Endothelial cell of umbilical vein (primary cell): ENCODE measurements at regions of chr15 and their contacts with region 1.

Region 1: GRCh38 chr15:40338041-40338657 is 2.6 kb downstream of the CCDC9B start:
- DNase-seq: peak; percentile 75
- H3K4me3 ChIP-seq: no peak overlapping the region
- H3K27ac ChIP-seq: peak overlapping the region; percentile 94
- H3K4me1 ChIP-seq: peaks cover 68% of the 10 kb centered on the region
- H3K27me3 ChIP-seq: no peaks in the 10 kb centered on the region
- CTCF ChIP-seq: peak; percentile 75 to 90
- POLR2A ChIP-seq: no peak

Region 2: DNA sequence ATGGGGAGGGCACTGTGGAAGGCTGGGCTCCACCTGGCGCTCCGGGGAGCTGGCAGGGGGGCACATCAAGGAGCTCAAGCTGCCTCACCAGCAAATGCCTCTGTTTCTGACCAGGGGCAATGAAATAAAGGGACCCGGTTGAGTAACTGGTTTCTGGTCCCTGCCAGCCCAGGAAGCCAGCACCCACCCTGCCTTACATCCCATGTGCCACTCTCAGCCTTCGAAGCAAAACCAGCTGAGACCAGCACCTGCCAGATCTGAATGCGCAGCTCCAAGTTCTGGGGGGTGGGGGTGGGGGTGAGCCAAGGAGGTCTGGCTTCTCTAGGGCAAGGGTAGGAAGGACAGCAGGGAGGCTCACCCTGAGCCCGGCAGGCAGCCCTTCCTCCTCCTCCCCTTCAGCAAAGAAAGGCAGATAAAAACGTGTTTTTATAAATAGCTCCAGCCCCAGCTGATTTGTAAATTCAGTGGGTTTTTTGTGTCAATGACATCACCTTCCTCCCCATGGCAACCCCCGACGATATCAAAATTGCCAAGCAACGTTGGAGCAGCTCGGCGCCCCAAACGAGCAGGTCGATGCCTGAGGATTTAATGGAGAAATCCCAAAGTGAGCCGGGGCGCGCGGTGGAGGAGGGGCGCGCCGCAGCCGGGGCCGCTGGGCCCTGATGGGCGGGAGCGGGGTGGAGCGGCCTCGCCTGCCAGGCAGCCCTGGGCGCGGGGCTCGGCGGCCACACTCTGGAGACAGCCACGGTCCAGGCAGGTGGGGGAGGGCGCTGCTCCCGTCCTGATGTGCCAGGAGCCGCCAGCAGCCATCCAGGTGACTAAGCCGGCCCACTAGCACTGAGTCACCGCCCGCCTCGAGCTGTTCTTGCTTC is 99.4 kb before region 1 on chr15 and contains the start of gene PAK6:
- CTCF ChIA-PET with region 1: no interaction called
- POLR2A ChIA-PET with region 1: no interaction called
- dilution Hi-C with region 1: no loop called
- intact Hi-C with region 1: no loop called
- DNase-seq: peak; percentile 11
- H3K4me3 ChIP-seq: peak within 1 kb of the TSS in 2 of 3 experiments; percentile 13 to 37
- H3K27ac ChIP-seq: no peak within 1 kb of the TSS
- H3K4me1 ChIP-seq: peaks cover 4% of the 10 kb centered on the region
- H3K27me3 ChIP-seq: peaks cover 10 to 14% of the 10 kb centered on the region in 2 experiments
- CTCF ChIP-seq: no peak
- POLR2A ChIP-seq: no peak
- total RNA-seq, gene PAK6: not detected in 2 replicates

Region 3: DNA sequence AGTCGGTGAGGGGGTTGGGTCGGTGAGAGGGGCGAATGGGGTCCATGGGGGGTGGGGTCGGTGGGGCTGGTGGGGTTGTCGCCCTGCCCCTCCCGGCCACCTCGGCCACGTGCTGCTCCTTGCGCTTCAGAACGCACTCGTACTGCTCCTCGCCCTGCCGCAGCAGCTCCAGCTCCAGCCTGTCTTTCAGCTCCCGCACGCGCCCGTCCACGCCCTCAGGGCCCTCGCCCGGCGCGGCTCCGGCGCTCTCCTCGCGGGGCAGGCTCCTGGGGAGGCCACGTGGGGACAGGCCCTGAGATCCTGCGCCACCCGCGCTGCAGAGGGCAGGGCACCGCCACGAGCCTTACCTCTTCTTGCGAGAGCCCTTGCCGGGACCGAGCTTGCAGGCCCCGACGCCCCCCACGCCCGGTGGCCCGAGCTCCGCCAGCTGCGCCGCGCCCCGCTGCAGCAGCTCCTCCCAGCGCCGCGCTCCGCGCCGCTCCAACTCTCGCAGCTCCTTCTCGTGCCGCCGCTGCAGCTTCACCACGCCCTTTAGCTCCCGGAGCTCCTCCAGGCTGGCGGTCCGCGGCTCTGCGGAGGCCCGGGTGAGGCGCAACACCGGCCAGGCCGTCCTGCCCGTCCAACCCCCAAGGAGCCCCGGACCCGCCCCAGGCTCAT is 47.1 kb before region 1 on chr15:
- CTCF ChIA-PET with region 1: interaction called, 29 read pairs
- POLR2A ChIA-PET with region 1: interaction called, 4 read pairs
- dilution Hi-C with region 1: no loop called
- intact Hi-C with region 1: no loop called
- DNase-seq: peak; percentile 36
- H3K4me3 ChIP-seq: peak overlapping the region in 1 of 3 experiments; percentile 23
- H3K27ac ChIP-seq: no peak overlapping the region
- H3K4me1 ChIP-seq: no peaks in the 10 kb centered on the region
- H3K27me3 ChIP-seq: peaks cover 0 to 27% of the 10 kb centered on the region in 2 experiments
- CTCF ChIP-seq: no peak
- POLR2A ChIP-seq: no peak

Region 4: DNA sequence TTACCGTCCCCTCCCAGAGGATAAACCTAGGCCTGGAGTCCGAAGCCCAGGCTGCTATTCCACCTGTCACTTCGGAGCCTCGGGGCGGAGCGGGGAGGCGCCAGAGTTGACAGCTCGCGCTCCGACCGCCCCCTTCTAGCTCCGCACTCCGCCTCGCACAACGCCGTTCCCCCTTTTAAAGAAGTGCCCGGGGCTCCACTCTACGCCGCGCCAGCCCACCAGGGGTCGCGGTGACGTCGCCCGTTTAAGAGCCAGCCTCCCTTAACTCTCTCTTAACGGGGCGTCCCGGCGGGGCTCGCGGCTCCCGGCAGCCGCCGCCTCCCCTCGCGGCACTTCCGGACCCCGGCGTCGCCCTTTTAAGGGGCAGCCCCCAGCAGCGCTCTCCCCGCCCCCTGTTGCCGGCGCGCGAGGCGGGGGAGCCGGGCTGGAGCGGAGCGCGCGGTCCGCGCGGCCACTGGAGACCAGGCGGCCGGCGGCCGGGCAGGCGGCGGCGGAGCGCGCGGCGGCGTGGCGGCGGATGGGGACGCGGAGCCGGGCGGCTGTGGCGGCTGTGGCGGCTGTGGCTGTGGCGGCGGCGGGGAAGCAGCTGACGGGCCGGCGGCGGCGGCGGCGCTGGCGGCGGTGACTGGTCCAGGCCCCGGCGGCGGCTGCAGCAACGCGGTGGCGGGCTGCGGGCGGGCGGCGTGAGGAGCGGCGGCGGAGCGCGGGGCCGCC is 14.8 kb before region 1 on chr15 and contains the start of gene INAFM2:
- CTCF ChIA-PET with region 1: interaction called, 287 read pairs
- POLR2A ChIA-PET with region 1: interaction called, 12 read pairs
- dilution Hi-C with region 1: no loop called
- intact Hi-C with region 1: loop called (anchors 1 kb)
- DNase-seq: peak; percentile 98
- H3K4me3 ChIP-seq: peak within 1 kb of the TSS; percentile 41 to 67 (median 57)
- H3K27ac ChIP-seq: peak within 1 kb of the TSS; percentile 8
- H3K4me1 ChIP-seq: peaks cover 50% of the 10 kb centered on the region
- H3K27me3 ChIP-seq: no peaks in the 10 kb centered on the region
- CTCF ChIP-seq: peak; percentile 74 to 83
- POLR2A ChIP-seq: peak; percentile 67
- total RNA-seq, gene INAFM2: 23.6 and 24.1 TPM in 2 replicates

Region 5: DNA sequence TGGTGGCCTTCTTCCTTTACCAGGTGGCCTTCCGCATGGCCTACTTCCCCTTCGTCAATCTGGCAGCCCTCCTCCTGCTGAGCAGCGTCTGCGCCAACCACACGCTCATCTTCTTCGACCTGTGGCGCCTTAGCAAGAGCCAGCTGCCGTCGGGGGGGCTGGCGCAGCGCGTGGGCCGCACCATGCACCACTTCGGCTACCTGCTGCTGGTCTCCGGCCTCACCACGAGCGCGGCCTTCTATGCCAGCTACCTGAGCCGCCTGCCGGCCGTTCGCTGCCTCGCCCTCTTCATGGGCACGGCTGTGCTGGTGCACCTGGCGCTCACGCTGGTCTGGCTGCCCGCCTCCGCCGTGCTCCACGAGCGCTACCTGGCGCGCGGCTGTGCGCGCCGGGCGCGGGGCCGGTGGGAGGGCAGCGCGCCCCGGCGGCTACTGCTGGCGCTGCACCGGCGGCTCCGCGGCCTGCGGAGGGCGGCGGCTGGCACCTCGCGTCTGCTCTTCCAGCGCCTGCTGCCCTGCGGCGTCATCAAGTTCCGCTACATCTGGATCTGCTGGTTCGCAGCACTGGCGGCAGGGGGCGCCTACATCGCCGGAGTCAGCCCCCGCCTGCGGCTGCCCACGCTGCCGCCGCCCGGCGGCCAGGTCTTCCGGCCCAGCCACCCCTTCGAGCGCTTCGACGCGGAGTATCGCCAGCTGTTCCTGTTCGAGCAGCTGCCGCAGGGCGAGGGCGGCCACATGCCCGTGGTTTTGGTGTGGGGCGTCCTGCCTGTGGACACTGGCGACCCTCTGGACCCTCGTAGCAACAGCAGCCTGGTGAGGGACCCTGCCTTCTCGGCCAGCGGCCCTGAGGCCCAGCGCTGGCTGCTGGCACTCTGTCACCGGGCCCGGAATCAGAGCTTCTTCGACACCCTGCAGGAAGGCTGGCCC is 29.8 kb after region 1 on chr15:
- CTCF ChIA-PET with region 1: interaction called, 60 read pairs
- POLR2A ChIA-PET with region 1: no interaction called
- dilution Hi-C with region 1: no loop called
- intact Hi-C with region 1: loop called (anchors 1 kb)
- DNase-seq: peak; percentile 85
- H3K4me3 ChIP-seq: peak overlapping the region in 2 of 3 experiments; percentile 15 to 22
- H3K27ac ChIP-seq: no peak overlapping the region
- H3K4me1 ChIP-seq: peaks cover 10% of the 10 kb centered on the region
- H3K27me3 ChIP-seq: no peaks in the 10 kb centered on the region
- CTCF ChIP-seq: peak; percentile 86 to 98
- POLR2A ChIP-seq: no peak